Breast epithelium (tissue), 4 donors: ENCODE measurements at regions of chr6 and their contacts with region 1.

Region 1: DNA sequence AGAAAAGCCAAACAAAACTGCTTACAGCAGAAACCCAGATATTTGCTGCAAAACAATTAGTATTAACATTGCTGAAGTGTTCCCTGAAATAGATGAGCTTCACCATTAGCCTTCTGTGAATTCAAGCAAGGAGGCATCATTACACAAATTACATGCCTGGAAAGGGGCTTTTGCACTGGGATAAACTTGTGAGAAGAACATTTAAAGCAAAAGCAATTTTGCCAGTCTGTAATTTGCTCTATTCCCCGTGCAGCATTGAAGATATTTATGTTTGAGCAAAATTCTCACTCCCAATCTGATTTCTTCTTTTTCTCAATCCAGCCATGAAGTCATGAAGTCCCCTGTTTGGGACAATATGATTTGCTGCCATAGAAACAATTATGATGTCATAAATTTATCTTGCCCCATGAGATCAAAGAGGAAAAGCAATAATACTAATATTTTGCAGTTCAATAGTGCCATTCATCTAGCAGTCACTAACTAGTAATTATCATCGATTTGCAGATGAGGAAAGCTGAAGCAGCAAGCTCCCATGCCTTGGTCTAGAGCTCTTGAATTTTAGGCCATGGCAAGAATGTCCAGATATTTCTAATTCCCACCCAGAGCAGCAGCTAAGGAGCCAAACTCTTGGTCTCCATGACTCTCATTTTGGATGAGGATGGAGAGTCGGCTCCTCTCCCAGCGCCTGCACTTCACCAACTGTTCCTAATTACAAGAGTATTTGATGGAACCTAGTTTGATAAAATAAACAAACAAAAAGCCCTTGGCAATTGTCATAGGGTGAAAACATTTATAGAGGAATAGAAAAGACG is 49.5 kb upstream of the CCN6 start:
- DNase-seq: no peak
- H3K4me3 ChIP-seq: no peak overlapping the region
- H3K27ac ChIP-seq: peak overlapping the region in 1 of 2 donors; percentile 2
- H3K4me1 ChIP-seq: no peaks in the 10 kb centered on the region
- H3K27me3 ChIP-seq: no peaks in the 10 kb centered on the region
- CTCF ChIP-seq: no peak
- POLR2A ChIP-seq: no peak

Region 2: GRCh38 chr6:110270165-110270564 is 1734.2 kb before region 1 on chr6:
- intact Hi-C with region 1: no loop called
- DNase-seq: no peak
- H3K4me3 ChIP-seq: no peak overlapping the region
- H3K27ac ChIP-seq: no peak overlapping the region
- H3K4me1 ChIP-seq: no peaks in the 10 kb centered on the region
- H3K27me3 ChIP-seq: no peaks in the 10 kb centered on the region
- CTCF ChIP-seq: no peak
- POLR2A ChIP-seq: no peak

Region 3: DNA sequence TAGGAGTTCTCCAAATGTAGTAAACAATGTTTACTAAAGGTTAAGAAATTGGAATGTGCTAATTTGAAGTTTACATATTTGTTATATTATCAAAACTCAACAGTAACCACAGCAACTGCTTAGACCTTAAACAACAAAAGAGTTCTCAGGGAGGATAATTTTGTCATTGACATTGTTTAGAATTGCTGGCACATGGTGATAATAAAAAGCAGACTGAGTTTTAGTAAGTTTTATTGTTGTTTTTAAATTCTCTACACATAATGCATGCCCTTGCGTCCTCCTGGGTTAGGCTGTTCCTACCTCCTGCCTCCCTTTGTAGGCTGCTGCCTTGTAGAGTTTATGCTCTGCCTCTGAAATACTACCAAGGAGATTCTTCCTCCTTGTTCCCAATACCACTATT is 221.3 kb after region 1 on chr6:
- intact Hi-C with region 1: loop called (anchors 5 kb)
- DNase-seq: no peak
- H3K4me3 ChIP-seq: no peak overlapping the region
- H3K27ac ChIP-seq: peak overlapping the region; percentile 1 to 61
- H3K4me1 ChIP-seq: peaks cover 0 to 2% of the 10 kb centered on the region in 2 donors
- H3K27me3 ChIP-seq: no peaks in the 10 kb centered on the region
- CTCF ChIP-seq: no peak
- POLR2A ChIP-seq: no peak